Vagina (tissue), 2 donors: ENCODE measurements at regions of chr5 and their contacts with region 1.

Region 1: DNA sequence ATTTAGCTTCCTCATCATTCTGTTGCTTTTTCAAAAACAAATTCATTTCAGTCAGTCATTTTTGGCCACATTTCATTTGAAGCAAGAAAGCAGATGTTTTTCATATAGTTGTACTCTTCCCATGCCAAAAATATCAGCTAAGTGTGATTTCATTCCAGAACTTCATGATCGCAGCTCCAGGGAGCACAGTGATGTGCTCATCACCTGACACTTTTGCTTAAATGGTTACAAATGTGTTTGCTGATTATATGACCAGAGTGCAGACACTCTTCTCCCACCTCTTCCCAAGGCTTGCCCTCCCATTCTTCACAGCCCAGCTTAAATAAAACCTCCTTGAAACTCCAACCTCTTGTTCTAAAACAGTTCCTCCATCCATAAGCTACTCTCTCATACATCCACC is 32.6 kb downstream of the GABRB2 start:
- DNase-seq: no peak
- H3K4me3 ChIP-seq: no peak overlapping the region
- H3K27ac ChIP-seq: no peak overlapping the region
- H3K4me1 ChIP-seq: no peaks in the 10 kb centered on the region
- H3K27me3 ChIP-seq: no peaks in the 10 kb centered on the region
- CTCF ChIP-seq: no peak
- POLR2A ChIP-seq: no peak

Region 2: DNA sequence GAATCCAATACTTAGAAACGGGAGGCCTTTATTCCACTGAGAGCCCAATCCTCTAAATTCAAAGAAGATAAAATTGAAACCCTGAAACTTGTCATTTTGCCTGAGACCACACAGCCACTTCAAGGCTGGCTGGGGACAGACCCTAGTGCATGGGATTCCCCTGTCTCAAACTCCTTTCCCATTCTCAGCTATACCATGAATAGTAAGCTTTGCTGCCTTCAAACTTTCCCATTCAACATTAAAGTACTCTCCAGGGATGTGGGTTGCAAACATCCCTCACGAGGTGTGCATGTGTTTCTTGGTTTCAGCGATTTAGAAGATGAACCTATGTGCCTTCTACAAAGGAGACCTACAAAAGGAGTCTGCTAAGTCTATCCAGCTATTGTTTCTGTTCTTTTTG is 32.0 kb before region 1 on chr5:
- intact Hi-C with region 1: loop called (anchors 2 kb)
- DNase-seq: no peak
- H3K4me3 ChIP-seq: no peak overlapping the region
- H3K27ac ChIP-seq: no peak overlapping the region
- H3K4me1 ChIP-seq: no peaks in the 10 kb centered on the region
- H3K27me3 ChIP-seq: no peaks in the 10 kb centered on the region
- CTCF ChIP-seq: no peak
- POLR2A ChIP-seq: no peak